Endothelial cell of umbilical vein (primary cell): ENCODE measurements at regions of chr19 and their contacts with region 1.

Region 1: DNA sequence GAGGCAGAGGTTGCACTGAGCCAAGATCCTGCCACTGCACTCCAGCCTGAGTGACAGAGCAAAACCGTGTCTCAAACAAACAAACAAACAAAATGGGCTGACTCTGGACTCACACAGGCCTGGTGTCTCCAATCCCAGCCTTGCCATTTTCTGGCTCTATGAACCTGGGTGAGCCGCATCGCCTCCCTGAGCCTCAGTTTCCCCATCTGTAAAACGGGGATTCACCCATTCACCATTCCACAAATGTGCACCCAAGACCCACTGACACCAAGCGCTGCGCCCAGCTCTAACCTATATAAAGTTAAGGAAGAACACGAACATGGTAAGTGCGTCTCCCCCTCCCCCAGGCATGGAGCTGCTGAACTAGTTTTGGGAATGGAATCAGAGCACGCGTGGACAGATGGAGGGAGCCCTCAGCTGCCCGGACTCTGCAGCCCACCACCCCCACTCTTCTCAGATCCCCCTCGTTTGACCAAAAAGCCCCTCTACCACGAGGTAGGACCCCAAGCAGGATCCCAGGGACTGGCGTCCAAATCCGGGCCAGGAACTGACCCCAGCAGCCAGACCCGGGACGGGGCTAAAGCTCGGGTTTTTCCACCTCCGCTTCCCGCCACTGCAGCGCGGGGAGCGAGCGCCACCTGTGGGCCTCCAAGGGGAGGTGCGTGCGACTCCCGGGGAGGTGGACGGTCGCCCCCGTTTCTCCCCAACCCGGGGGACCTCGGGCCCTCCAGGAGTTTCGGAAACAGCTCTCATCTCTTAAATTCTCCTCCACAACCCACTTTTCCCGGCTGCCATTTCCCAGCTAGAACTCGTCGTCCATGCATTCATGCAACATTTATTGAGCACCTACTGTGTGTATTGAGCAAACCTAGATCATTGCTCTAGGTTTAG is 33.0 kb upstream of the ADGRE5 start:
- DNase-seq: peak; percentile 37
- H3K4me3 ChIP-seq: no peak overlapping the region
- H3K27ac ChIP-seq: no peak overlapping the region
- H3K4me1 ChIP-seq: no peaks in the 10 kb centered on the region
- H3K27me3 ChIP-seq: peaks cover 4% of the 10 kb centered on the region in 2 experiments
- CTCF ChIP-seq: peak; percentile 97 to 99
- POLR2A ChIP-seq: no peak

Region 2: GRCh38 chr19:14147797-14148605 is 200.2 kb before region 1 on chr19:
- CTCF ChIA-PET with region 1: interaction called, 43 read pairs
- POLR2A ChIA-PET with region 1: no interaction called
- dilution Hi-C with region 1: no loop called
- intact Hi-C with region 1: loop called (anchors 1 kb)
- DNase-seq: peak; percentile 77
- H3K4me3 ChIP-seq: no peak overlapping the region
- H3K27ac ChIP-seq: peak overlapping the region; percentile 43
- H3K4me1 ChIP-seq: peaks cover 24% of the 10 kb centered on the region
- H3K27me3 ChIP-seq: no peaks in the 10 kb centered on the region
- CTCF ChIP-seq: peak; percentile 86 to 98
- POLR2A ChIP-seq: no peak

Region 3: GRCh38 chr19:14198384-14199376 is 149.6 kb before region 1 on chr19:
- CTCF ChIA-PET with region 1: interaction called, 124 read pairs
- POLR2A ChIA-PET with region 1: interaction called, 4 read pairs
- dilution Hi-C with region 1: no loop called
- intact Hi-C with region 1: loop called (anchors 1 kb)
- DNase-seq: no peak
- H3K4me3 ChIP-seq: no peak overlapping the region
- H3K27ac ChIP-seq: no peak overlapping the region
- H3K4me1 ChIP-seq: no peaks in the 10 kb centered on the region
- H3K27me3 ChIP-seq: no peaks in the 10 kb centered on the region
- CTCF ChIP-seq: peak in 1 of 2 donors; percentile 2
- POLR2A ChIP-seq: no peak

Region 4: GRCh38 chr19:14248578-14249011 is 99.6 kb before region 1 on chr19:
- CTCF ChIA-PET with region 1: no interaction called
- POLR2A ChIA-PET with region 1: no interaction called
- dilution Hi-C with region 1: no loop called
- intact Hi-C with region 1: no loop called
- DNase-seq: peak; percentile 57
- H3K4me3 ChIP-seq: peak overlapping the region; percentile 16 to 40 (median 23)
- H3K27ac ChIP-seq: no peak overlapping the region
- H3K4me1 ChIP-seq: peaks cover 3% of the 10 kb centered on the region
- H3K27me3 ChIP-seq: no peaks in the 10 kb centered on the region
- CTCF ChIP-seq: no peak
- POLR2A ChIP-seq: no peak

Region 5: DNA sequence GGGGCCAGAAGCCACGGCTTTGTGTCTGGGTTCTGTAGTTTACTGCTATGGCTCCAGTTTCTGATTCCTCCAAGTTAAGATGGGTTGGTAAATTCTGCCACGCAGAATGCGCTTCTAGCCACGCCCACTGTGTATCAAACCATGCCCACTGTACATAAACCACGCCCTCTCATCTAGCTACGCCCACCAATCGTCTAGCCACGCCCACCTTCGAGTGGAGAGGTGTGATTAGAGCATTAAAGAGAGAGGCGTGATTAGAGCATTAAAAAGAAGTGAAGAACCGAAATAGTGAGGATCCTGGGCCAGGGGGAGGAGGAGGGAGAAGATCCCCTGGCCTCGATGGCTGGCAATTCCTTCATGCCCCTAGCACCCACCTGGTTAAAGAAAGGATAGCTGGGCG is 10.7 kb before region 1 on chr19:
- CTCF ChIA-PET with region 1: interaction called, 14 read pairs
- POLR2A ChIA-PET with region 1: no interaction called
- dilution Hi-C with region 1: no loop called
- intact Hi-C with region 1: no loop called
- DNase-seq: peak; percentile 35
- H3K4me3 ChIP-seq: no peak overlapping the region
- H3K27ac ChIP-seq: no peak overlapping the region
- H3K4me1 ChIP-seq: no peaks in the 10 kb centered on the region
- H3K27me3 ChIP-seq: no peaks in the 10 kb centered on the region
- CTCF ChIP-seq: no peak
- POLR2A ChIP-seq: no peak

Region 6: DNA sequence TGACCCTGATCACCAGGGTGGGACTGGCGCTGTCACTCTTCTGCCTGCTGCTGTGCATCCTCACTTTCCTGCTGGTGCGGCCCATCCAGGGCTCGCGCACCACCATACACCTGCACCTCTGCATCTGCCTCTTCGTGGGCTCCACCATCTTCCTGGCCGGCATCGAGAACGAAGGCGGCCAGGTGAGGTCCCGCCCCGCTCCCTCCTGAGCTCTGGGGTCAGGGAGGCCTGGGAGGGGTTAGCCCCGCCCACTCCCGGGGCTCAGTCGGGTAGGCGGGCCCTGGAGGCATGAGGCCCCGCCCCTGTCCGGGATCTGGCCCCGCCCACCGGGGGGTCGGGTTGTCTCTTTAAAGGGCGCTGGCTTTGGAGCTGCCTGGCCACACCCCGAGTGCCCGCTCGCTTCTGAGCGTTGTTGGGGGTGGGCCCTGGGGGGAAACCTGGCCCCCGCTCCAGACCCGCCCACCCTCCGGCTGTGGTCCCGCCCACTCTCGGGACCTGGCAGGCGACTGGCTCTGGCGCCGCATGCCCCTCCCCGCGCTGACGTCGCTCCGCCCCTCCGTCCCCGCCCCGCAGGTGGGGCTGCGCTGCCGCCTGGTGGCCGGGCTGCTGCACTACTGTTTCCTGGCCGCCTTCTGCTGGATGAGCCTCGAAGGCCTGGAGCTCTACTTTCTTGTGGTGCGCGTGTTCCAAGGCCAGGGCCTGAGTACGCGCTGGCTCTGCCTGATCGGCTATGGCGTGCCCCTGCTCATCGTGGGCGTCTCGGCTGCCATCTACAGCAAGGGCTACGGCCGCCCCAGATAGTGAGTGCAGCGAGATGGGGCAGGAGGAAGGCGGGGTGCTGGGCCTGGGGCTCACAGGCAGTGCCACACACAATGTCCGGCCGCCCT is 57.8 kb after region 1 on chr19:
- CTCF ChIA-PET with region 1: interaction called, 28 read pairs
- POLR2A ChIA-PET with region 1: no interaction called
- dilution Hi-C with region 1: no loop called
- intact Hi-C with region 1: loop called (anchors 2 kb)
- DNase-seq: peak; percentile 93
- H3K4me3 ChIP-seq: peak overlapping the region in 1 of 3 experiments; percentile 9
- H3K27ac ChIP-seq: no peak overlapping the region
- H3K4me1 ChIP-seq: no peaks in the 10 kb centered on the region
- H3K27me3 ChIP-seq: no peaks in the 10 kb centered on the region
- CTCF ChIP-seq: peak; percentile 36 to 92
- POLR2A ChIP-seq: no peak

Region 7: GRCh38 chr19:14479975-14480699 is 131.9 kb after region 1 on chr19:
- CTCF ChIA-PET with region 1: no interaction called
- POLR2A ChIA-PET with region 1: no interaction called
- dilution Hi-C with region 1: no loop called
- intact Hi-C with region 1: no loop called
- DNase-seq: no peak
- H3K4me3 ChIP-seq: no peak overlapping the region
- H3K27ac ChIP-seq: no peak overlapping the region
- H3K4me1 ChIP-seq: peaks cover 9% of the 10 kb centered on the region
- H3K27me3 ChIP-seq: no peaks in the 10 kb centered on the region
- CTCF ChIP-seq: peak; percentile 88 to 97
- POLR2A ChIP-seq: no peak

Region 8: GRCh38 chr19:14517840-14518505 is 169.7 kb after region 1 on chr19 and contains the start of gene DNAJB1:
- CTCF ChIA-PET with region 1: no interaction called
- POLR2A ChIA-PET with region 1: no interaction called
- dilution Hi-C with region 1: no loop called
- intact Hi-C with region 1: no loop called
- DNase-seq: peak; percentile 78
- H3K4me3 ChIP-seq: peak within 1 kb of the TSS; percentile 59 to 93 (median 85)
- H3K27ac ChIP-seq: peak within 1 kb of the TSS; percentile 91
- H3K4me1 ChIP-seq: peaks cover 47% of the 10 kb centered on the region
- H3K27me3 ChIP-seq: no peaks in the 10 kb centered on the region
- CTCF ChIP-seq: no peak
- POLR2A ChIP-seq: peak; percentile 99
- total RNA-seq, gene DNAJB1: 55.8 and 58.6 TPM in 2 replicates

Region 9: DNA sequence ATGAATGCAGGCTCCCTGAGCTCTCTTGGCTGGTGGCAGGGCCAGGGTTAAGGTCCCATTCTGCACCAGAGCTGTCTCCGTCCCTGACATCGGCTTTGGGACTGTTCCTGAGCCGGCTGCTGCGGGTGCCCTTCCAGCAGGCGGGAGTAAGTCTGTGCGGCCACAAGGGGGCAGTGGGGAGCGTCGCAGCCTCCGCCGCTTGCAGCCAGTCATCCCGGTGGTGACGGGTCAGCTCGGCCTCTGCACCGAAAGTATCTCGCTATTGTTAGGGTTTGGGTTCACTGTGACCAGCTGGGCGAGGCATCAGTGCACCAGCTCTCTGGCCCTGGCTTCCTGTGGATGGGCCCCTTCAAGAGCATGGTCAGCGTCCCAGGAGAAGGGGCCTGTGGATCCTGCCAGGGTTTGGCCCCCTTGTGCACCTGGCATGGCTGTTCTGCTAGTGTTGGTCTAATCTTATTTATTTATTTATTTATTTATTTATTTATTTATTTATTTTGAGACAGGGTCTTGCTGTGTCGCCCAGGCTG is 208.5 kb after region 1 on chr19:
- CTCF ChIA-PET with region 1: no interaction called
- POLR2A ChIA-PET with region 1: no interaction called
- dilution Hi-C with region 1: no loop called
- intact Hi-C with region 1: no loop called
- DNase-seq: peak; percentile 79
- H3K4me3 ChIP-seq: no peak overlapping the region
- H3K27ac ChIP-seq: no peak overlapping the region
- H3K4me1 ChIP-seq: peaks cover 6% of the 10 kb centered on the region
- H3K27me3 ChIP-seq: no peaks in the 10 kb centered on the region
- CTCF ChIP-seq: peak; percentile 98 to 99
- POLR2A ChIP-seq: no peak